H1 (cell line): ENCODE measurements at regions of chr12 and their contacts with region 1.

Region 1: GRCh38 chr12:89352492-89353187 is at the start of gene DUSP6:
- DNase-seq: peak; percentile 93 to 96
- H3K4me3 ChIP-seq: peak within 1 kb of the TSS; percentile 49 to 85 (median 83)
- H3K27ac ChIP-seq: peak within 1 kb of the TSS; percentile 82
- H3K4me1 ChIP-seq: peaks cover 19 to 27% (median 21%) of the 10 kb centered on the region in 4 experiments
- H3K27me3 ChIP-seq: peaks cover 8 to 54% (median 31%) of the 10 kb centered on the region in 4 experiments
- CTCF ChIP-seq: no peak
- EP300 ChIP-seq: peak; percentile 18 to 81; a peak in 2 of 3 replicates
- POLR2A ChIP-seq: peak; percentile 90 to 92
- RAD21 ChIP-seq: peak in 1 of 2 experiments; percentile 1; a peak in 2 of 4 replicates
- total RNA-seq, gene DUSP6: 152 and 179 TPM in 2 replicates

Region 2: DNA sequence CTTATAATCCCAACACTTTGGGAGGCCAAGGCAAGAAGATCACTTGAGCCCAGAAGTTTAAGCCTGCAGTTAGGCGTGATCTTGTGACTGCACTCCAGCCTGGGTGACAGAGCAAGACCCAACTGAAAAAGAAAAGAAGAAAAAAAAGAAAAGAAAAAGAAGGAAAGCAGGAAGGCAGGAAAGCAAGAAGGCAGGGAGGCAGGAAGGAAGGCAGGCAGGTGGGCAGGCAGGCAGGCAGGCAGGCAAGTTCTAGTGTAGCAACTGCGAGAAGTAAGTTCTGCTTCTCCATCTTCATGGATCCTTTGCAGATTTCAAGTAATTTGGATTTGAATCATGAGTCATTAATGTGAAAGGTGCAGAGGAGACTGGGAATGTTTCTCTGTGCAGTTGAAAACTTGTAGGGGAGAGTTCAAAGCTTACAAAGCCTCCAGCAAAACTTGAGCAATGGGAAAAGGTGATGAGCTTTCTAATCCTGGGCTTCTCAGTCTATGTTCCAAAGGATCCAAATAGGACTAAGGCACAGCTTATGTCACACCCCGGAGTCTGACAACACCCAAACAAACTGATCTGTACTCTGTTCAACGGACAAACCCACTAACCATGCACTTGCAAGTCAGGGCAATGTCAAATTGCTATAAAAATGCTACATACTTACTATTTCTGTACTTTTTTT is 135.3 kb before region 1 on chr12:
- CTCF ChIA-PET with region 1: no interaction called
- POLR2A ChIA-PET with region 1: no interaction called
- DNase-seq: no peak
- H3K4me3 ChIP-seq: no peak overlapping the region
- H3K27ac ChIP-seq: no peak overlapping the region
- H3K4me1 ChIP-seq: peaks cover 0 to 2% (median 0%) of the 10 kb centered on the region in 4 experiments; a peak in 1 of 7 replicates
- H3K27me3 ChIP-seq: no peaks in the 10 kb centered on the region
- CTCF ChIP-seq: no peak
- EP300 ChIP-seq: no peak
- POLR2A ChIP-seq: no peak
- RAD21 ChIP-seq: no peak

Region 3: GRCh38 chr12:89364058-89364457 is 11.4 kb after region 1 on chr12:
- CTCF ChIA-PET with region 1: interaction called, 3 read pairs
- POLR2A ChIA-PET with region 1: interaction called, 10 read pairs
- DNase-seq: no peak
- H3K4me3 ChIP-seq: no peak overlapping the region
- H3K27ac ChIP-seq: no peak overlapping the region
- H3K4me1 ChIP-seq: peaks cover 0 to 3% (median 1%) of the 10 kb centered on the region in 4 experiments; a peak in 2 of 7 replicates
- H3K27me3 ChIP-seq: no peaks in the 10 kb centered on the region
- CTCF ChIP-seq: no peak
- EP300 ChIP-seq: no peak
- POLR2A ChIP-seq: no peak
- RAD21 ChIP-seq: no peak

Region 4: GRCh38 chr12:89383235-89384049 is 30.8 kb after region 1 on chr12:
- CTCF ChIA-PET with region 1: no interaction called
- POLR2A ChIA-PET with region 1: interaction called, 29 read pairs
- DNase-seq: no peak
- H3K4me3 ChIP-seq: no peak overlapping the region
- H3K27ac ChIP-seq: no peak overlapping the region
- H3K4me1 ChIP-seq: peaks cover 2 to 18% (median 10%) of the 10 kb centered on the region in 4 experiments; a peak in 6 of 7 replicates
- H3K27me3 ChIP-seq: no peaks in the 10 kb centered on the region
- CTCF ChIP-seq: no peak
- EP300 ChIP-seq: no peak
- POLR2A ChIP-seq: no peak
- RAD21 ChIP-seq: no peak

Region 5: GRCh38 chr12:89451841-89452251 is 99.2 kb after region 1 on chr12:
- CTCF ChIA-PET with region 1: interaction called, 5 read pairs
- POLR2A ChIA-PET with region 1: interaction called, 41 read pairs
- DNase-seq: peak; percentile 7 to 50
- H3K4me3 ChIP-seq: peak overlapping the region in 1 of 4 experiments; percentile 2; a peak in 1 of 8 replicates
- H3K27ac ChIP-seq: no peak overlapping the region
- H3K4me1 ChIP-seq: peaks cover 0 to 10% (median 6%) of the 10 kb centered on the region in 4 experiments; a peak in 3 of 7 replicates
- H3K27me3 ChIP-seq: no peaks in the 10 kb centered on the region
- CTCF ChIP-seq: no peak
- EP300 ChIP-seq: no peak
- POLR2A ChIP-seq: 0 out of 3 replicates have a peak, but pooled peaks of 1 of the 2 experiments have one; percentile 21
- RAD21 ChIP-seq: peak in 1 of 2 experiments; percentile 2; a peak in 1 of 4 replicates

Region 6: GRCh38 chr12:89497467-89497866 is 144.8 kb after region 1 on chr12:
- CTCF ChIA-PET with region 1: no interaction called
- POLR2A ChIA-PET with region 1: no interaction called
- DNase-seq: no peak
- H3K4me3 ChIP-seq: no peak overlapping the region
- H3K27ac ChIP-seq: no peak overlapping the region
- H3K4me1 ChIP-seq: 0 out of 7 replicates have a peak, but pooled peaks cover 0 to 3% (median 0%) of the 10 kb centered on the region in 4 experiments
- H3K27me3 ChIP-seq: no peaks in the 10 kb centered on the region
- CTCF ChIP-seq: no peak
- EP300 ChIP-seq: no peak
- POLR2A ChIP-seq: no peak
- RAD21 ChIP-seq: no peak